ENCODE measurements at regions of chr3 and their contacts with region 1.

Region 1: DNA sequence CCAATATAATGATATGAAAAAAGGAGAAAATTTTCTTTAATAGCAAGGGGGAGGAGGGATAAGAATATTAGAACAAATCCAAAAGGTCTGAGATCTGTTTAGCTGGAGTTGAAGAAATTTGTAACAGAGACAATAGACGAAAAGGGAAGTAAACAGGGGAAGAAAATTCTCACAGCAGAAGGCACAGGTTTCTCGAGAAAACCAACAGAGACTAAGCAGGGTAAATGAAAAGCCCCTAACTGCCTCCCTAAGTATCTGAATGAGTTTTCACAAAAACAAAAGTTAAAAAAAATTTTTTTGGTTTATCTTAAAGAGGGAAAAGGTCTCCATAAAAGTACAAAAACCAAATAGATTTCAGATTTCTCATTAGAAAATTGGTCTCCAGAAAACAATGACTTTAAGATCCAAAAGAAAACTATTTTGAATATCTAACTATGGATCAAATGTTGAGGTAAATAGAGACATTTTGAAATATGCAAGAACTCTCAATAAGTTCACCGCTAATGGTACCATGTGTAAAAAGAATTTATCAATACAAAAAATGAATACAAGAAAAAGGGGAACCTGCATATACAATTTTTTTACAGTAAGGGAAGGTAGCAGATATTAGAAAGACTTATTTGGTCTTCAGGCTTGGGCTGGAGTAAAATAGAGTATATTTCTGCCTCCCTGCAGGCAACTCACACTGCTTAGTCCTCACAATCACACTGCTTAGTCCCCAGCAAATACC is 23.9 kb upstream of the NEK10 start:
- DNase-seq: no peak
- ATAC-seq: no peak
- H3K4me3 ChIP-seq: no peak overlapping the region
- H3K4me3 Mint-ChIP-seq: no peak overlapping the region
- H3K27ac ChIP-seq: no peak overlapping the region
- H3K27ac Mint-ChIP-seq: no peak overlapping the region
- H3K4me1 ChIP-seq: no peaks in the 10 kb centered on the region
- H3K4me1 Mint-ChIP-seq: no peaks in the 10 kb centered on the region
- H3K27me3 ChIP-seq: no peaks in the 10 kb centered on the region
- H3K27me3 Mint-ChIP-seq: no peaks in the 10 kb centered on the region
- CTCF ChIP-seq: no peak

Region 2: GRCh38 chr3:27431116-27431515 is 38.0 kb after region 1 on chr3:
- CTCF ChIA-PET with region 1: no interaction called
- POLR2A ChIA-PET with region 1: no interaction called
- intact Hi-C with region 1: loop called in 1 of 2 experiments (anchors 5 kb)
- DNase-seq: no peak
- ATAC-seq: no peak
- H3K4me3 ChIP-seq: no peak overlapping the region
- H3K4me3 Mint-ChIP-seq: no peak overlapping the region
- H3K27ac ChIP-seq: no peak overlapping the region
- H3K27ac Mint-ChIP-seq: no peak overlapping the region
- H3K4me1 ChIP-seq: no peaks in the 10 kb centered on the region
- H3K4me1 Mint-ChIP-seq: no peaks in the 10 kb centered on the region
- H3K27me3 ChIP-seq: no peaks in the 10 kb centered on the region
- H3K27me3 Mint-ChIP-seq: no peaks in the 10 kb centered on the region
- CTCF ChIP-seq: no peak

Measured in CD8-positive, alpha-beta T cell (primary cell).